ENCODE measurements at regions of chr4 and their contacts with region 1.

Region 1: DNA sequence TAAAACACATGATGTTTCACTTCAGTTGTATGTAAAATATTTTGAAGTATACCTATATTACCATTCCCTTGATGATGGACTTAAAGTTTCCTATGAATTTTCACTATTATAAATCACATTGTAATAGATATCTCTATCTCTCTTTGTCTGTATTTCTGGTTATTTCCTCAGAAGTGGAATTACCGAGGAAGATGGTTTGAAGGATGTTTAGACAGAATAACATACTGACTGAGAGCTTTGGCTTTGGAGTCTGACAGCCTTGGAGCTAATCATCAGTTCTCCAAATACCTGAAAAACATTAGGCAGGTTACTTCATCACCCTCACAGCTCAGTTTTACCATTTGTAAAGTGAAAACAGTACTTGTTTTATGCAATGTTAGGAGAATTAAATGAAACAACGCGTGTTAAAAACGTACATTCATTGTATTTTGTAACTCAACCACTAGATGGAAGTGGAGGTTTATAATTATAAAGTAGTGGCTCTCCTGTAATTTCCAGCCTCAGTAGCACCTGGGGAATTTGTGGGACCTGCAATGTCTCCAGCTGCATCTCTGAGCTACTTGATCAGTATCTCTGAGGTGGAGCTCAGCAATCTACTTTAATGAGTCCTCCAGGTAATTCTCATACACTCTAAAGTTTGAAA is 14.3 kb downstream of the JCHAIN start:
- DNase-seq: no peak
- H3K4me3 ChIP-seq: no peak overlapping the region
- H3K27ac ChIP-seq: no peak overlapping the region
- H3K4me1 ChIP-seq: no peaks in the 10 kb centered on the region
- H3K27me3 ChIP-seq: no peaks in the 10 kb centered on the region
- CTCF ChIP-seq: peak; percentile 42 to 62 (median 59)
- POLR2A ChIP-seq: no peak

Region 2: DNA sequence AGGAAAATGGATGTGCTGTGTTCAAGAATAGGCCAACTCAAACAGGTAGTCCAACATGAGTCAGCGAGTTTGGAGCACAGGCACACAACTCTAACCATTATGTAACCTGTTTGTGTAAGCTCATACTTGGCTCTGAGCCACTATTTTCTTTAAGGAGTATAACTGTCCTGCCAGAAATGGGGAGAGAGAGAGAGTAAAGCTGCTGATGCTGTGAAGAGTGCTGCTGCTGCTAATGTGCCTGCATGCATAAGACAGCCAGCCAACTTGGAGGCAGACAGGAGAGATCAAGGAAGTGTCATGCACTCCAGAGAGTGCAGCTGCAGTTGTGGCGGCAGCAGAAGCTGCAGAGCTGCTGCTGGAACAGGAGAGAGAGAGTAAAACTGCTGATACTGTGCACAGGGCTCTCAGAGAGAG is 667.9 kb before region 1 on chr4:
- intact Hi-C with region 1: no loop called
- DNase-seq: no peak
- H3K4me3 ChIP-seq: no peak overlapping the region
- H3K27ac ChIP-seq: no peak overlapping the region
- H3K4me1 ChIP-seq: no peaks in the 10 kb centered on the region
- H3K27me3 ChIP-seq: no peaks in the 10 kb centered on the region
- CTCF ChIP-seq: no peak
- POLR2A ChIP-seq: no peak

Region 3: DNA sequence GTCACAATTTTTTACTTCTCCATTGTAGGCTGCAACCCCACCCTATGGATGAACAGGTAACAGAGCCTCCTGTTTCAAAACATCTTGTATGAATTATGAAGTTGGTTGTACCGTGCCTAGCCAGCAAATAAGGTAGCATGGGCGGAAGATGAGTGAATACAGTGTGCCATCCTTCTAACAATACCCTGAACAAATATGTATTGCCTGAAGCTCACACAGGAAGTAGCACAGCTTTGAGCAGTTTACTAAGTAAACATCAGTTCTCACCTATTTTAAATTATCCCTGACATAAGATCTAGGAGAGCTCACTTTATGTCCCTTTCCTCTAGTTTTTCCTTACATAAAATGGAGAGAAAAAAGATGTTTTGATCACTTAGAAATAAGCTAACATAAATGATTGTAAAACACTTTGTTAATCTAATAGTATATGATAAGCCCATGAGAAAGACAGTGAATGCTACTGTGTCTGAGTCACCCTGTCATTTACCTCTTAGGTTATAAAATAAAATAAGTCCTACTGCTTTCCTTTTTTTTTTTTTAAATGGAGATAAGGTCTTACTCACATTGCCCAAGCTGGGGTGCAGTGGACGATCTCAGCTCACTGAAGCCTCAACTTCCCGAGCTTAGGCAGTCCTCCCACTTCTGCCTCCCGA is 151.1 kb after region 1 on chr4:
- intact Hi-C with region 1: no loop called
- DNase-seq: no peak
- H3K4me3 ChIP-seq: no peak overlapping the region
- H3K27ac ChIP-seq: no peak overlapping the region
- H3K4me1 ChIP-seq: no peaks in the 10 kb centered on the region
- H3K27me3 ChIP-seq: no peaks in the 10 kb centered on the region
- CTCF ChIP-seq: no peak
- POLR2A ChIP-seq: no peak

Region 4: DNA sequence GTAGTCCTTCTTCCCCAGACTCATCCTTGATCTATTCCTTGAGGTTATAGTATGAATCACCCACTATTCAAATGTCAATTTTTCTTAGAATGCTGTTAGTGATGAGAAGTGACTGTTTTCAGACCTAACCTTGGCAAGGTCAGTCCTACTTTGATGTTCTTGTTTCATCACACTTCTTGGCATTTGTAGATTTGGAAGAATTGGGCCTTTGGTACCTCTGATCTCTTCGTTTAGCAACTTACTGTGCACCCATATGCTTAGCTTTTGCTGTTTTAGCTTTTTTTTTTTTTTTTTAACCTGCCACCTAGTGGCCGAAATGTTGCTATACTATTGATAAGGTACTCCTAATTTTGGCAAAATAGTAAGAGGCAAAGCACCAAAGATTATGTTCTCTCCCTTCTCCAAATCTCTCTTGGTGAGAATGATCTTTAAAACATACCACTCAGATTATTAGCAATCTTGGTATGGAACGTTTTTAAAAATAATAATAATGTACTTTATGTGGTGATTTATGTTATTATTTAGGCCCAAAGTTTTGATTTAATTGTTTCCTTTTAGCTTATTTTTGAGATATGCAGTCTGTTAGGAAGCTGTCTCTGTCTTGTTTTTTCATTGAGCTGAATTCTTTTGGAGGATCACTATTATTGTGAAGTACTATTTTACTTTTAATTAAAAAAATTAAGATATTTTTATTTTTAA is 358.1 kb after region 1 on chr4:
- intact Hi-C with region 1: loop called (anchors 10 kb)
- DNase-seq: no peak
- H3K4me3 ChIP-seq: no peak overlapping the region
- H3K27ac ChIP-seq: no peak overlapping the region
- H3K4me1 ChIP-seq: no peaks in the 10 kb centered on the region
- H3K27me3 ChIP-seq: no peaks in the 10 kb centered on the region
- CTCF ChIP-seq: peak; percentile 38 to 55 (median 49)
- POLR2A ChIP-seq: no peak